Lower leg skin (tissue), 4 donors: ENCODE measurements at regions of chr16 and their contacts with region 1.

Region 1: DNA sequence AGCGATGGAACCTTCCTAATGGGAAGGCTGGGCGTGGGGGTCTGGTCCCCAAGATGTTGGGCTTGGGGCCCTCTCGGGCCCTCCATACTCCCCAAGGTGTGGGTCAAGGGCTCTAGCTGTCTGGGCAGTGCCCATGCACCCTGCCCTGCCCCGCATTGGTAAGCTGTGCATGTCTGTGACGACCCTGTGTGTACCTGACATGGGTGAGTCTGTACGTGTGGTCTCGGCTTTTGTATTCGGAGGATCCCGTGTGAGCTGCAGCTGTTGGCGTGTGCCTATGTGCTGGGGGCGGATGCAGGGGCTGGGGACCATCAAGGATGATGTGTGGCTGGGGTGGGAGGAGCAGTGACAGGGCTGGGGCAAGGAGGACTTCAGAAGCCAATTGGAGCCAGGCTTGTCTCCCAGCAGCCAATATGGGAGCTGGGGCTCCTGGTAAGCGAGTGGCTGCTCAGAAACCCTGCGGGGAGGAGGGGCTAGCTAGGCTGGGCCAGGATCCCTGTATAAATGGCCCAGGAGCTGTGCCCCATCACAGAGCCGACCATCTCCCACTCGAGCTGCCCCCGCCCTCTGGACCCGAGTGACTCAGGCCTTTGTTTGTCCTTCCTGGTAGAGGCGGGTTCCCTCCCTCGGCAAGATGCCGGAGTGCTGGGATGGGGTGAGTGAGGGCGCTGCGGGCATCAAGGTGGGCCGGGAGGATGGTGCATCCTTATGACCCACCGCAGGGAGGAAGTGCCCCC is at the start of gene NDRG4:
- DNase-seq: peak in 1 of 2 donors; percentile 84
- H3K4me3 ChIP-seq: no peak within 1 kb of the TSS
- CTCF ChIP-seq: no peak
- POLR2A ChIP-seq: no peak
- total RNA-seq, gene NDRG4: 29.7 to 97.2 (median 64.0) TPM

Region 2: DNA sequence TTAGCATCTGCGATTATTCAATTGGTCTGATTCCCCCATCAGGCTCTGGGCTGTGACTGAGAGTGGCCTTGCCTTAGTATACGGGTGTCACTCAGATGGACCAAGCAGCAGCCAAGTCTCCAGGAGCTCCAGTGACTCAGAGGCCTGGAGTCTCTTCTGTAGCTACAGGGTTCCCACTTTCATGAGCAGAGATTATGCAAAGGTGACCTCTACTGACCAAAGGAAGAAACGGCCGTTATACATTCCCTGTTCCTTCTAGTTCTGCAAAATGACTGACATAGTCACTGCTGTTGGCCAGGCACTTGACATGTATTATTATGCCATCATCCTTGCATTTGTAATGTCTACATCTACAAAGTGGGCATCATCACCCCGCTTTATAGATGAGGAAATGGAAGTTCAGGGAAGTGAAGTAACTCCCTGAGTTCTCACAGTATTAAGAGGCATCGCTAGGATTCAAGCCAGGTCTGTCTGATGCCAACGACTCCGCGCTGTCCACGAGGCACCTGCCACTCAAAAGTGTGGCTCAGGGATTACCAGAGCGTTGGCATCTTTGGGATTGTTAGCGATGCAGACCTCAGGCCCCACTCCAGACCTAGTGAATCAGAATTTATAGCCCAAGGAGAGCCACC is 161.5 kb after region 1 on chr16:
- intact Hi-C with region 1: loop called (anchors 10 kb)
- DNase-seq: peak in 1 of 2 donors; percentile 39
- H3K4me3 ChIP-seq: no peak overlapping the region
- CTCF ChIP-seq: no peak
- POLR2A ChIP-seq: no peak

Region 3: DNA sequence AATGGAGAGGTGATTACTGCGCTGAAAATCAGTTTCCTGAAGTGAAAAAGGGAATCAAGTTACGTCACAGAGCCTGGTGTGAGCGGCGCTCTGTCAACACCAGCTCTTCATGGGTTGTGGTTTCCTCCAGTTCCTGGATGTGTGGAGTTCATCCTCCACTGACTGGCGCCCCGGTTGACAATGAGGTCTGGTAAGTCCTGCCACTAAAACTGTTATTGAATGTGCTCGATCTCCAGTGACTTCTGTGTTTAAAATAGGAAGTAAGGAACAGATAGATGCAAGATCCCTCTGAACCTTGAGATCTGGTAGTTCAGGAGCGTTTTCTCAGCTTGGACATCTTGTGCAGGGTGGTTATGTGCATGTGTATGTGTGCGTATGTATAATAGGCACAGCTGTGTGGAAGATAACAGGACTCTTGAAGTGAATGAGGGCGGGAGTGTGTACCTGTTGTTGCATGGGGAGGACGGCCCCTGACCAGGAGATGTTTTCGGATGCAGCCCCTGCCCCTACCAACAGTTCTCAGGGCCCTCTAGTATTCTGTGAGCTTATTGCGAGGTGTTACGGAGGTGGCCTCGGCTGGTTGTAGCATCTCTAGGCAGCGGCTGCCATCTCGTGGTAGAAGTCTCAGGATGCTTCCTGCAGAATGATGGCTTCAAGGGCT is 256.3 kb after region 1 on chr16:
- intact Hi-C with region 1: no loop called
- DNase-seq: peak; percentile 39 to 90
- H3K4me3 ChIP-seq: no peak overlapping the region
- CTCF ChIP-seq: no peak
- POLR2A ChIP-seq: no peak